ENCODE measurements at regions of chr12 and their contacts with region 1.

Region 1: GRCh38 chr12:53344824-53345485 is 8.8 kb upstream of the SP7 start:
- DNase-seq: peak; percentile 70
- H3K4me3 Mint-ChIP-seq: peak overlapping the region; percentile 88
- H3K27ac Mint-ChIP-seq: peak overlapping the region; percentile 26
- H3K4me1 Mint-ChIP-seq: peaks cover 18% of the 10 kb centered on the region
- H3K27me3 Mint-ChIP-seq: peaks cover 15% of the 10 kb centered on the region

Region 2: DNA sequence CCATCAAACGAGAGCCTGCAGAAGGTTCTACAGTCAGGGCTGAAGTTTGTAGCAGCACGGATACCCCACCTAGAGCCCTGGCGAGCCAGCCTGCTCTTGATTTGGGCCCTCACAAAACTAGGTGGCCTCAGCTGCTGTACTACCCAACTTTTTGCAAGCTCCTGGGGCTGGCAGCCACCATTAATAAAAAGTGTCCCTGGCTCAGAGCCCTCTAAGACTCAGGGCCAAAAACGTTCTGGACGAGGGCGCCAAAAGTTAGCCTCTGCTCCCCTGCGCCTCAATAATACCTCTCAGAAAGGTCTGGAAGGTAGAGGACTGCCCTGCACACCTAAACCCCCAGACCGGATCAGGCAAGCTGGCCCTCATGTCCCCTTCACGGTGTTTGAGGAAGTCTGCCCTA is 58.5 kb before region 1 on chr12:
- CTCF ChIA-PET with region 1: no interaction called
- POLR2A ChIA-PET with region 1: no interaction called
- DNase-seq: no peak
- H3K4me3 Mint-ChIP-seq: no peak overlapping the region
- H3K27ac Mint-ChIP-seq: no peak overlapping the region
- H3K4me1 Mint-ChIP-seq: peaks cover 12% of the 10 kb centered on the region
- H3K27me3 Mint-ChIP-seq: no peaks in the 10 kb centered on the region

Region 3: DNA sequence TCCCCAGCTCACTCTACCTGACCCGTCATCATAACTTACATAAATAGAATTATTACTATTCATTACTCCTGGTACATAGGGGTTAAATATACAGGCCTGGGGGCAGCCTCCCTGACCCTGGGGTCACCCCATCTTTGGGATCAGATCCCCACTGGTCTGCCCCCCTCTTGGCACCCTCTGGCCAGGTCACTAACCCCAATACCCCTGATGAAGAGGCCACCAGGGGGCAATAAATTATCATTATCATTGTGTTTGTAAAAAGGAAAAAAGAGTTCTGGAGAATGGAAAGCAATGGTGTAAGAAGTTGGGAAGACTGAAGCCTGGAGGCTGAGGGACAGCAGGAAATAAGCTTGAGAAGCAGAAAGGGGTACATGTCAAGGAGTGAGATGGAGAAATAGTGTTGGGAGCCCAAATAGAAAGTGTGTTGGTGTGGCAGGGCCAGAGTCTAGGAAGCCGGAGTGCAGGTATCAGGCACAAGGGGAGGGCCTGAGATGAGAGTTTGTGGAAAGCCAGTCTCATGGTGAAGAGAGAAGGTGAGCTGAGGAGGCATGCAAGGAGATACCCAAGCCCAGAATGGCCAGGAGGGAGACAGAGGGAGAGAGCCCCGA is 17.4 kb before region 1 on chr12:
- CTCF ChIA-PET with region 1: interaction called, 110 read pairs
- POLR2A ChIA-PET with region 1: interaction called, 30 read pairs
- DNase-seq: no peak
- H3K4me3 Mint-ChIP-seq: peak overlapping the region; percentile 4
- H3K27ac Mint-ChIP-seq: no peak overlapping the region
- H3K4me1 Mint-ChIP-seq: peaks cover 21% of the 10 kb centered on the region
- H3K27me3 Mint-ChIP-seq: peaks cover 27% of the 10 kb centered on the region

Region 4: DNA sequence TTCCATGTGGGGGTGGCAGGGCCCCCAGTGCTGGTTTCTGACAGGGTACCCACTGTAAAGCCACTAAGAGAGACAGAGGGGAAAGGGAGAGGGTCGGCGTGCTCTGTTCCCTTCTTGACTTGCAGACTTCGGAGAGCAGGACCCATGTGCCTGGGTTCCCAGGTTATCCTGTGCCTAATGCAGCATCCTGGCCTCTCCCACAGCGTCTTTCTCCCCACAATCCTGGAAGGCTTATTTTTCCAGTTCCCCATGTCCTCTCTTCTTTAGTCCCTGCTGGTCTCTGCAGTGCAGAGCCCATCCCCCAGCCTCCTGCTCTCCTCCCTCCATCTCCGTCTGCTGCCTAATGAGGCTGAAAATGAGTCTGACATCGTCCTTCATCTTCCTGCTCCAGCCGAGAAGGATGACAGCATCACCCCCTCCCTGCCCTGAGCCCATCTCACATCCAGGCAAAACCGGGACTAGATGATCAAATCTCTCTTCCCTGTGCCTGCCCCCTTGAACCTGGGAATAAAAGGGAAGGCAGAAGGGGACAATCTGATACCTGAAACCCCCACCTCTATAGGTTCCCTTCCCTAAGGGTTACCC is 367.2 kb after region 1 on chr12:
- CTCF ChIA-PET with region 1: no interaction called
- POLR2A ChIA-PET with region 1: no interaction called
- DNase-seq: no peak
- H3K4me3 Mint-ChIP-seq: no peak overlapping the region
- H3K27ac Mint-ChIP-seq: no peak overlapping the region
- H3K4me1 Mint-ChIP-seq: no peaks in the 10 kb centered on the region
- H3K27me3 Mint-ChIP-seq: peaks cover 13% of the 10 kb centered on the region

Measured in activated CD4-positive, alpha-beta memory T cell treated with anti-CD3 and anti-CD28 coated beads, Interleukin-2, amount 10 ng/mL, durations not matched to agents 7 days and 5 days (primary cell).